ENCODE measurements at regions of chr5 and their contacts with region 1.

Region 1: GRCh38 chr5:10145923-10146401 is 103.7 kb downstream of the ATPSCKMT start:
- DNase-seq: peak; percentile 70
- H3K4me3 Mint-ChIP-seq: no peak overlapping the region
- H3K27ac Mint-ChIP-seq: no peak overlapping the region
- H3K4me1 Mint-ChIP-seq: no peaks in the 10 kb centered on the region
- H3K27me3 Mint-ChIP-seq: no peaks in the 10 kb centered on the region
- CTCF ChIP-seq: peak; percentile 40

Region 2: DNA sequence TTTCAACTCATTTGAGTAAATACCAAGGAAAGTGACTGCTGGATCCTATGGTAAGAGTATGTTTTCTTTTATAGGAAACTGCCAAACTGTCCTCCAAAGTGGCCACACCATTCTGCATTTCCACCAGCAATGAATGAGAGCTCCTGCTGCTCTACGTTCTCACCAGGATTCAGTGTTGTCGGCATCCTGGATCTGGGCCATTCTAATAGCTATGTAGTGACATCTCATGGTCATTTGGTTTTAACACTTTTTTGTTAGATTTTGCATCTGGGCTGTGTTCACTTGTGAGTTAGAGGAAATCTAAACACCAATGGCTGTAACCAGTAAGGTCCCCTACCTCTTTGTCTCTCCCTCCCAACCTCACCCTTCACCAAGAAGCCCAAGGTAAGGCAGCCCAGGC is 12.1 kb before region 1 on chr5:
- CTCF ChIA-PET with region 1: interaction called, 13 read pairs
- POLR2A ChIA-PET with region 1: no interaction called
- intact Hi-C with region 1: no loop called
- DNase-seq: peak; percentile 14
- H3K4me3 Mint-ChIP-seq: no peak overlapping the region
- H3K27ac Mint-ChIP-seq: no peak overlapping the region
- H3K4me1 Mint-ChIP-seq: no peaks in the 10 kb centered on the region
- H3K27me3 Mint-ChIP-seq: no peaks in the 10 kb centered on the region
- CTCF ChIP-seq: no peak

Region 3: GRCh38 chr5:10220243-10220642 is 74.3 kb after region 1 on chr5:
- CTCF ChIA-PET with region 1: no interaction called
- POLR2A ChIA-PET with region 1: no interaction called
- intact Hi-C with region 1: no loop called
- DNase-seq: no peak
- H3K4me3 Mint-ChIP-seq: no peak overlapping the region
- H3K27ac Mint-ChIP-seq: no peak overlapping the region
- H3K4me1 Mint-ChIP-seq: no peaks in the 10 kb centered on the region
- H3K27me3 Mint-ChIP-seq: no peaks in the 10 kb centered on the region
- CTCF ChIP-seq: no peak